H1 (cell line): ENCODE measurements at regions of chr3 and their contacts with region 1.

Region 1: DNA sequence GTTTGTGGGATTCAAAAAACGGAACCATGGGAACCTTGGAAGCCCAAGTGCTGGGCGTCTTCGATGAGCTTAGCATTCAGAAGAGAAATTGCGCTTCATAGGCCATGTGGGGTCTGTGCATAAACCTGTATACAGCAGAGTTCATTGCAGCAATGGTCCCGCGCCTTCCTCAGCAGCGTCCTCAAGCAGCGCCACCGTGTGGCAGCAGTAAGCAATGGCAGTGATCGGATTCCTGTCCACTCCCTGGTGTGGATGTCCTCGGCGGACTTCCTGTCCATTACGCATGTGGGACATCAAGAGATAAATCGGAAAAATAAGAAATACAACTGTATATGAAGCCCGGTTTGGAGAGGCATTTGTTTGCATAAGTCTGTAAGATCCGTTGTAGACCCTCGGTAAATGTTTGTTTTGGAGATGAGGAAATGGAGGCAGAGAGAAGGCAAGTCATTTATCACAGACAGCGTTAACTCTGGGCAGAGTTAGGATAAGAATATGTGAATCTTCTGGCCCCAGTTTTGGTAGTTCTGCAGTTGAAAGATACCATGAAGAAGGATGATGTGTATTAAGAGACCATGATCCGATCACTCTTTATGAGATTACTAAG is 57.7 kb downstream of the CNTN4 start:
- DNase-seq: peak in 1 of 2 experiments; percentile 80
- H3K4me3 ChIP-seq: no peak overlapping the region
- H3K27ac ChIP-seq: no peak overlapping the region
- H3K4me1 ChIP-seq: no peaks in the 10 kb centered on the region
- H3K27me3 ChIP-seq: peaks cover 0 to 3% (median 0%) of the 10 kb centered on the region in 4 experiments; a peak in 2 of 7 replicates
- CTCF ChIP-seq: peak; percentile 76 to 100 (median 95)
- EP300 ChIP-seq: no peak
- POLR2A ChIP-seq: no peak
- RAD21 ChIP-seq: peak; percentile 81 to 83

Region 2: GRCh38 chr3:1929788-1930414 is 226.4 kb before region 1 on chr3:
- CTCF ChIA-PET with region 1: no interaction called
- POLR2A ChIA-PET with region 1: no interaction called
- DNase-seq: no peak
- H3K4me3 ChIP-seq: no peak overlapping the region
- H3K27ac ChIP-seq: no peak overlapping the region
- H3K4me1 ChIP-seq: no peaks in the 10 kb centered on the region
- H3K27me3 ChIP-seq: no peaks in the 10 kb centered on the region
- CTCF ChIP-seq: no peak
- EP300 ChIP-seq: no peak
- POLR2A ChIP-seq: no peak
- RAD21 ChIP-seq: no peak

Region 3: DNA sequence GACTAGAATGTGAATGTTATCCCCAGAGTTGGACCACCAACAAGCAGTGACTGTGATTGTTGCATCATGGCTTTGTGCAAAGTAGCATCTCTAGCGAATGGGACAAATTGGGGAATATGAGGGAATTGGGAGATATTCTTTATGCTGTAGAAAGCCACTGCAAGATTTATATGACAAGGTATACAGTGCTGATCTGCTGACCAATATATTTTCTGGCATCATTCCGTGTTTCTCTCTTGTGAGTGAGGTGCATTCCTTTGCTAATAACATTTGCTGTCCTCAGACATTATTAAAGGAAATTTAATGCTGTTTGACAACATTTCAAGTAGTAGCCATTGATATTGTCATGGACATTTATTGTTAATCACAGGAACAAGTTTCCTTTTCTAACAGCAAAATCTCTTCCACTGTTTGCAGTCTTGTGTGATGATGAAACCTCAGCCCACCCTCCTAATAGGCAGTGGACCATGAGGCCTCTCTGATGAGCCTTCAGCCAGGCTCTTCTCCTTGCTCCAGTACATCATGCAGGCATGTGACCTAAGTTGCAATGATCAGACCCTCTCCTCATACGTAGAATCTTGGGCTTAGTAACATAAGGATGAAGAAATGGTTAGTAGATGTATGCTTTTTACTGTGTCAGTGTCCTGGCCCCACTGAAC is 41.6 kb before region 1 on chr3:
- CTCF ChIA-PET with region 1: interaction called, 10 read pairs
- POLR2A ChIA-PET with region 1: no interaction called
- DNase-seq: no peak
- H3K4me3 ChIP-seq: no peak overlapping the region
- H3K27ac ChIP-seq: no peak overlapping the region
- H3K4me1 ChIP-seq: peaks cover 0 to 7% (median 0%) of the 10 kb centered on the region in 4 experiments; a peak in 1 of 7 replicates
- H3K27me3 ChIP-seq: no peaks in the 10 kb centered on the region
- CTCF ChIP-seq: no peak
- EP300 ChIP-seq: no peak
- POLR2A ChIP-seq: no peak
- RAD21 ChIP-seq: no peak

Region 4: GRCh38 chr3:2166552-2166951 is 10.2 kb after region 1 on chr3:
- CTCF ChIA-PET with region 1: interaction called, 23 read pairs
- POLR2A ChIA-PET with region 1: no interaction called
- DNase-seq: no peak
- H3K4me3 ChIP-seq: no peak overlapping the region
- H3K27ac ChIP-seq: no peak overlapping the region
- H3K4me1 ChIP-seq: no peaks in the 10 kb centered on the region
- H3K27me3 ChIP-seq: no peaks in the 10 kb centered on the region
- CTCF ChIP-seq: peak in 2 of 3 experiments; percentile 27 to 56; a peak in 2 of 4 replicates
- EP300 ChIP-seq: no peak
- POLR2A ChIP-seq: no peak
- RAD21 ChIP-seq: peak; percentile 34 to 40

Region 5: DNA sequence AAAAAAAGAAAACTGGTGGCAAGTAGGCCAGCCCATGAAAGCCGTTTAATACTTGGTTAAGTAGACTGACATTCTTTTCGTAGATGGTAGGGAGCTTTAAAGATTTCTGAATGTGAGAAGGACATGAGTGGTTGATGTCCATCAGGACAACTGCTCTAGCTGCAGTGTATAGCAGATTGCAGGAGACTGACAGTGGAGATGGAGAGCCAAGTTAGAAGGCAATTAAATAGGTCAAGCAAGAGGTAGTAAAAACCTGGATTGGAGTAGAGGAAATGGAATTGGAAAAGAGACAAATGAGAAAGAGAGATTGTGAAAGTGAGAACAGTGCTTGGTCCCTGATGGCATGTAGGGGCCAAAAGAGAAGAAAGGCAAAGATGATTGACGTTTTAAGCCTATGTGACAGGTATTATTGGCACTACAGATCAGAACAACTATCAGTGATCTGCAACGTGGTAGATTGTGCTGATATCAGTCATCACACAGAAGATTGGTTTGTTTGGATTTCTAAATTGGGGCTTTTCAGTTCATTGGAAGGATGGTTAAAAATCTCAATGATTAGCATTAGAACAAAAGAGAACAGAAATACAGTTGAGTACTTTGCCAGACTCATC is 16.3 kb after region 1 on chr3:
- CTCF ChIA-PET with region 1: interaction called, 23 read pairs
- POLR2A ChIA-PET with region 1: no interaction called
- DNase-seq: no peak
- H3K4me3 ChIP-seq: no peak overlapping the region
- H3K27ac ChIP-seq: no peak overlapping the region
- H3K4me1 ChIP-seq: peaks cover 0 to 2% (median 0%) of the 10 kb centered on the region in 4 experiments; a peak in 2 of 7 replicates
- H3K27me3 ChIP-seq: no peaks in the 10 kb centered on the region
- CTCF ChIP-seq: no peak
- EP300 ChIP-seq: no peak
- POLR2A ChIP-seq: no peak
- RAD21 ChIP-seq: no peak

Region 6: DNA sequence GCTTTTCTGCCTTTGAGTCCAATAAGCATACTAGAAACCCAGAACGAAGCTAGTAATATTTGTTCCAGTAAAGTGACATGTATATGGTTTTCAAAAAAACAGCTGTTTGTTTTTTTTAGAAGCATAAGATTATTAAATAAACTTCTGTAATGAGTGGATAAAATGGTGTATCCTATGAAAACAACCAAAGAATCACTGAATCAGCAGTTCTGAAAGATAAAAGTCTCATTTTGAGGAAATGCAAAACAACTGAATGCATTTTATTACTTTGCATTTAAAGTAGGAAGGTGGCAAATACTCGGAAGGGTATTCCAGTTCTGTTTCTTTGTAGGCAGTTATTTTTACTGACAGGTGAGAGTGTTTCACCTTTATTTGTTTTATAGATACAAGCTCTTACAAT is 49.3 kb after region 1 on chr3:
- CTCF ChIA-PET with region 1: no interaction called
- POLR2A ChIA-PET with region 1: no interaction called
- DNase-seq: no peak
- H3K4me3 ChIP-seq: no peak overlapping the region
- H3K27ac ChIP-seq: no peak overlapping the region
- H3K4me1 ChIP-seq: no peaks in the 10 kb centered on the region
- H3K27me3 ChIP-seq: no peaks in the 10 kb centered on the region
- CTCF ChIP-seq: no peak
- EP300 ChIP-seq: no peak
- POLR2A ChIP-seq: no peak
- RAD21 ChIP-seq: no peak